ENCODE measurements at regions of chr3 and their contacts with region 1.

Region 1: GRCh38 chr3:88219138-88219792 is 69.5 kb downstream of the C3orf38 start:
- DNase-seq: peak; percentile 69
- ATAC-seq: peak; percentile 99
- H3K4me3 ChIP-seq: no peak overlapping the region; a peak in 1 of 6 replicates
- H3K27ac ChIP-seq: no peak overlapping the region
- H3K4me1 ChIP-seq: no peaks in the 10 kb centered on the region
- H3K27me3 ChIP-seq: no peaks in the 10 kb centered on the region
- CTCF ChIP-seq: peak; percentile 84
- EP300 ChIP-seq: no peak
- POLR2A ChIP-seq: no peak
- RAD21 ChIP-seq: peak; percentile 50; the same call in 1 of the 2 replicates

Region 2: GRCh38 chr3:88641033-88641604 is 421.9 kb after region 1 on chr3:
- CTCF ChIA-PET with region 1: no interaction called
- POLR2A ChIA-PET with region 1: no interaction called
- in situ Hi-C with region 1: no loop called
- intact Hi-C with region 1: no loop called
- DNase-seq: no peak
- ATAC-seq: no peak
- H3K4me3 ChIP-seq: no peak overlapping the region
- H3K27ac ChIP-seq: no peak overlapping the region
- H3K4me1 ChIP-seq: no peaks in the 10 kb centered on the region
- H3K27me3 ChIP-seq: no peaks in the 10 kb centered on the region
- CTCF ChIP-seq: no peak
- EP300 ChIP-seq: no peak
- POLR2A ChIP-seq: no peak
- RAD21 ChIP-seq: no peak

Region 3: GRCh38 chr3:89098964-89099585 is 879.8 kb after region 1 on chr3:
- CTCF ChIA-PET with region 1: no interaction called
- POLR2A ChIA-PET with region 1: no interaction called
- in situ Hi-C with region 1: no loop called
- intact Hi-C with region 1: loop called (anchors 1 kb)
- DNase-seq: peak; percentile 31
- ATAC-seq: peak; percentile 86
- H3K4me3 ChIP-seq: no peak overlapping the region
- H3K27ac ChIP-seq: no peak overlapping the region
- H3K4me1 ChIP-seq: no peaks in the 10 kb centered on the region
- H3K27me3 ChIP-seq: no peaks in the 10 kb centered on the region
- CTCF ChIP-seq: peak; percentile 73
- EP300 ChIP-seq: no peak
- POLR2A ChIP-seq: no peak
- RAD21 ChIP-seq: peak; percentile 44; the same call in 1 of the 2 replicates

Region 4: GRCh38 chr3:89113903-89114840 is 894.9 kb after region 1 on chr3:
- CTCF ChIA-PET with region 1: interaction called, 5 read pairs
- POLR2A ChIA-PET with region 1: no interaction called
- in situ Hi-C with region 1: no loop called
- intact Hi-C with region 1: loop called (anchors 1 kb)
- DNase-seq: peak; percentile 20
- ATAC-seq: peak; percentile 100
- H3K4me3 ChIP-seq: peak overlapping the region; percentile 23 to 70 (median 34); a peak in 4 of 6 replicates
- H3K27ac ChIP-seq: no peak overlapping the region
- H3K4me1 ChIP-seq: peaks cover 7% of the 10 kb centered on the region; the same call in 1 of the 2 replicates
- H3K27me3 ChIP-seq: no peaks in the 10 kb centered on the region; a peak in 1 of 5 replicates
- CTCF ChIP-seq: peak; percentile 90
- EP300 ChIP-seq: no peak
- POLR2A ChIP-seq: no peak
- RAD21 ChIP-seq: peak; percentile 55

Region 5: DNA sequence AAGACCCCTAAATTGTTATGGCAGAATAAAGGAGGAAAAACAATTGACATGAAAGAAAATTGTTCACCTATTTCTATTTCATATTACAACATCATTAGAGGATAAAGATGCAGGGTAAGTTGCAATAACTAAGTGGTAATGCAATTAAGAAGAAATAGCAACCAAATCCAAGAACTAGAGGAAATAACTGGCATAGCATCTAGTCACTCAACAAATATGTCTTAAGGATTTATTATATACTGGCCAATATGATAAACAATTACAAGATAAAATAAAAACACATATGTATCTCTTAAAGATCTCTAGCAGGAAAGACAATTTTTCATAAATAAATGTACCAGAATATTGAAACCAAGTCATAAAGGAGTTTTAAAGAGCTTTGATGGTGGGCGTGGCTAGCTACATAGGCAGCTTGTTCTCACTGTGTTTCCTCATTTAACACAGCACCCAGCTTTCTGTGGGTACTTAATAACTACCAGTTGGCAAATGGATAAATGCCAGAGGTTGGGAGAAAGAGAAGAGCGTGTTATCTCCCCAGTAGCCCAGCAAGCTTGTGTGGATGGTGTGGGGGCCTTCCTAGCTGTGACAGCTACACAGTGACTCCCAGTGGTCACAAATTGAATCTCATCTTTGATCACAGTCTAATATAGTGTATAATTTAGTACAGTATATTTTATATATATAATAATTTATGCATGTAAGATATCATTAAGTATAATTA is 1872.1 kb after region 1 on chr3:
- CTCF ChIA-PET with region 1: no interaction called
- POLR2A ChIA-PET with region 1: no interaction called
- in situ Hi-C with region 1: no loop called
- intact Hi-C with region 1: loop called (anchors 5 kb)
- DNase-seq: peak; percentile 2
- ATAC-seq: peak; percentile 89
- H3K4me3 ChIP-seq: no peak overlapping the region
- H3K27ac ChIP-seq: no peak overlapping the region
- H3K4me1 ChIP-seq: no peaks in the 10 kb centered on the region
- H3K27me3 ChIP-seq: no peaks in the 10 kb centered on the region; a peak in 1 of 5 replicates
- CTCF ChIP-seq: peak; percentile 42
- EP300 ChIP-seq: no peak
- POLR2A ChIP-seq: no peak
- RAD21 ChIP-seq: no peak